GM10248 (cell line): ENCODE measurements at regions of chr17 and their contacts with region 1.

Region 1: DNA sequence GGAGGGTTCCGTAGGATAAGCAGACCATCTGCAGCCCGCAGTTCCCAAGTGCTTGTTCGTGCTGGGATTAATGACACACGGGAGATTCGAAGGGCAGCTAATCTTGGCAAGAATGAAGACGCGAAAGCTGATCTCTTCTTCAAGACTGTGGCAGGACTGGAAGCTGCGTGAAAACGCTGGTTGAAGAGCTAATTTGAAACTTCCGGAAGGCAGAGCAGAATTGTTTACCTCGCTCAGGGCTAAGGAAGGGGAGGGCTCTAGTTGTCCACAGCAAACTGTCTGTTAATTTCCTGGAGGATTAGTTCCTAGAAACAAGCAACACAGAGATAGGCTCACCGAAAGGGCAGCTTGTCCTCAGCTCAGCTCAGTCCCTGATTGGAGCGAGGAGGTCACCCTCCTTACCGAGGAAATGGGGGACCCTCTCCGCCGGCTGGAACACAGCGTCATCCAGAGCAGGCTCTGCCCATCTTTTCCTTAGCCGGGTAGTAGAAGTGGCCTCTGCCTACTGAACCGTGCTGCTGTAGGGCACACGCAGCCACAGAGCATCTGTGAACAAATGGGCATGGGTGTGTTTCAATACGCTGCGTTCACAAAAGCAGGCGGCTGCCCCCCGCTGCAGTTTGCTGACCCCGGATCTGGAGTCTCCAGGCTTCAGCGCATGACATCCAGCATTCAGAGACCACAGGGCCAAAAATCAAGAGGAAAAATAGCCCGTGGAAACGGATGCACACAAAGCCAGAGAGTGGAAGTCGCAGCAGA is 16.7 kb upstream of the BAIAP2 start:
- DNase-seq: no peak
- CTCF ChIP-seq: no peak

Region 2: DNA sequence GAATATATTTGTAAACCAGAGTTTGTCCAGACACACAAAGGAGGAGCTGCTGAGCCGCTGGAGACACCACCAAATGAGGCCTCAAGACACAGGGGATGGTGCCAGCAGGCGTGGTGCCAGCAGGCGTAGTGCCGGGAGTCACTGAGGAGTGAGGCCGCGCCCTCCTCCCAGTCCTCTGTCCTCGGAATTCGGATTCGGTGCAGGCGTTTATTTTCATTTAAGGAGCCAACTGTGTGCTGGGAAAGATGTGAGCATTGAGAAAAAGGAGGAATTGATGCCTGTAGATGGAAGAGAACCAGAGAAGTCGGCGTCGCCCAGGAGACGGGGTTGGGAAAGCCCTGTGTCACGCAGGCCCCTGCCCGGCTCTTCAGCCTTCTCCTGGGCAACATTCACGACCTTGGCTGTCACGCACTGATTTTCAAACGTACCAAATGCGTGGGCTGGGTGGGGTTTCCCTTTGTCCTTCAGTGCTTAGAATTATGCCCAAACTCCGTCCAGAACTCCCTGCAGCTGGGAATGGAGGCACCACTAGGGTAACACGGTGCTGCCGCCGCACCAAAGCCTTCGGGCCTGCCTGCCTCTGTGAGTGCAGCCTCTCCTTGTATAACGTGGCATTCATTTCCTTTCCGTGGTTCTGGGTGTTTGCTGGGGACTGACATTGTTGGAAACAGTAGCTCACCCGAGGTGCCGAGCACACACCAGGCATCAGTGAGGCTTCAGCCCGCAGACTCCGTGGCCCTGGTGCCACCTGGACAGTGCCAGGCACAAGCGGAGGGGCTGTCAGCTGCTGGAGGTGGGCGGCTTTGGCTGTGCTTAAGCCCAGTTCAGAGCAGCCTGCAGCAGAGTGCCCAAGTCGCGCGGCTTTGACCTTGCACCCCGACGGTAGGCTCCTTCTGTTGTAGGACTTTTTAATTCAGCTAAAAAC is 75.5 kb before region 1 on chr17:
- CTCF ChIA-PET with region 1: no interaction called
- POLR2A ChIA-PET with region 1: no interaction called
- DNase-seq: no peak
- CTCF ChIP-seq: no peak

Region 3: DNA sequence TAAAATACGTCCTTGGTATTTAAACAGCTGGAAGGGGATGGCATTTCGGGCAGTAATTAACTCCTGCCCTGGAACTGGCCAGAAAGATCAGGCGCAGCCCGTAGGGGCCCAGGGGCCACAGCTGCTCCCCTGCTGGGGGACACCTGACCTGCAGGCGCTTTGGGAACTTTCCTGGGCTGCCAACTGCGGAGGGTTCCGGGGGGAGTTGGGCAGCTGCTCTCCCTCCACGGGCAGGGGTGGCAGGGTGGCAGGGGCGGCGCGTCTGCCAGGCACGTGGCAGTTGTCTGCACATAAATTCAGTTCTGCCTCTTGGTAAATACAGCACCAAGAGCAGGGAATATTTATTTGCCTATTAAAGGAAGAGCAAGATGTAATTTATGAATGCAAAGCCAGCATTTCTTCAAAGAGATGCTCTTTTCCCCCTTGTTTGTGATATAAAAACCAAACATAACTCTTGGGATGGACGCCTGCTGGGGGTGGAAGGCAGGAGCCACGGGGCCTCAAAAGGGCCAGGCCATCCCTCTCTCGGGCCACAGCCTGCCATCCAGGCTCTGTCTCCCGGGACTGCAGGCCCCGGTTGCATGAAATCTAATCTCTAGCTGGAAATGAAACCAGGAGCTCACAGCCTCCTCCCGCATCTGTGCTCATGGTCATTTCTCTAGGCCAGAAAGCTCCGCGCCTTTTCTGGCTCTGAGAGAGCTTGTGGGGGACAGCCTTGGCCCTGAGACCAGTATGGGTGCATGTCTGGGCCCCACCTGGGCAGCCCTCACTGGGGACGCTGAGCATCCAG is 56.5 kb before region 1 on chr17:
- CTCF ChIA-PET with region 1: no interaction called
- POLR2A ChIA-PET with region 1: no interaction called
- DNase-seq: no peak
- CTCF ChIP-seq: no peak

Region 4: DNA sequence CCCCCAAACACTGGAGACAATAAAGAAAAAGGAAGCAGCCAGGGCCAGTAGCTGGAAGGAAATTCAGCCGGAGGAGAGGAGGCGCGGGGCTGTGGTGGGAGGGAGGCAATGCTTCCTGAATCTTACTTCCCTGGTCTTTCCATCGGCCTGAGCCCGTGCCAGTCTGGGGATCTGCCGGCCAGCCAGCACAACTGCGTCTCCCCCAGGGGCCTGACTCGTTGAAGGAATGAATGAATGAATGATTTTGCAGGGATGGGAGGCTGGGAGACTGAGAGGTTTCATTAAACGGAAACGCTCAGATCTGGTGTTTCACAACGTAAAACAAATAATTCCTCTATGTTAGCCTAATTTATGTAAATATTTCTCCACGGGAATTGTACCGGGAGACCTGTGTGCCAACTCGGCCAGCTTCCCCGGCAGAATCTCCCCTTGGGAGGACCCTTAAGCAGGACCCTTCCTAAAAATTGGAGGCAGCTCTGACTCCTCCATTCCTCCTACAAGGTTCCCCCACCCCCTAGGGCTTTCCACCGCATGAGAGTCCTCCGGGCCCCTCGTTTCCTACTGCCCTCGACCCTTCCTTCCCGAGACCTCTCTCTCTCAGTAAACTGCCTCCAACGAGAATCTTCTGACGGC is 15.4 kb after region 1 on chr17:
- CTCF ChIA-PET with region 1: interaction called, 10 read pairs
- POLR2A ChIA-PET with region 1: no interaction called
- DNase-seq: no peak
- CTCF ChIP-seq: no peak

Region 5: DNA sequence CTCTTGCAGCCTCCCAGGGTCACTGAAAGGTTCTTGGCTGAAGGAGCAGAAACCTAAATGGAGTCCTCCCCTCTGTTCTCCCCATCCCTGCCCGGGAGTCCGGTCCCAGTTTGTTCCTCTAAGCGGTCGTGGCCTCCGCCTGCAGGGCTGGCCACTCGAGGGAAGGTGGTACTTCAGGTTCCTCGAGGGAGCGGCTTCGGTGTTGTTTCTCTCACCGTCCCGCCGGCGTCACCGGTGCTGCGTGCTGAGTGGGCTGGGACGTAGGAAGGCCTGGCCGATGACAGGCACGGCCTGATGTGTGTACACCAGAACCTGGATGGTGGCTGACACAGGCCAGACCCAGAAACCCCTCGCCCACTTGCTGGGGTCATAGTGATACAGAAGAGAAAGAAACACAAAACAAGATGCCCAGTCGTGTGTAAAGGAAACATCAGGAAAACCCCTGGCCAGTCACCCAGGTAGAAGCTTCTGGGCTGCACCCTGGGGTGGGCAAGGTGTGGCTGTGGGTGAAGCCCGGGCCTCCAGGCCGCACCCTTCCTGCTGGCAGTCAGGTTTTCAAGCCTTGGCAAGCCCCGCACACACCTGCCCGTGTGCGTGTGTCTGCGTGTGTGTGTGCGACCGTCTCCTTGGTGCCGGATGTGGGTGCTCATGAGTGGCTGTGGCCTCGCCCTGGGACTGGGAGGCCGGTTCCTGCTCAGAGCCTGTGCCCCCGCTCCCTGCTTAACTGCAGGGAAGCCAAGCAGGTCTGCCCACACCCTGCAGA is 68.7 kb after region 1 on chr17:
- CTCF ChIA-PET with region 1: no interaction called
- POLR2A ChIA-PET with region 1: no interaction called
- DNase-seq: no peak
- CTCF ChIP-seq: no peak